Natural killer cell (primary cell): ENCODE measurements at regions of chr1 and their contacts with region 1.

Region 1: DNA sequence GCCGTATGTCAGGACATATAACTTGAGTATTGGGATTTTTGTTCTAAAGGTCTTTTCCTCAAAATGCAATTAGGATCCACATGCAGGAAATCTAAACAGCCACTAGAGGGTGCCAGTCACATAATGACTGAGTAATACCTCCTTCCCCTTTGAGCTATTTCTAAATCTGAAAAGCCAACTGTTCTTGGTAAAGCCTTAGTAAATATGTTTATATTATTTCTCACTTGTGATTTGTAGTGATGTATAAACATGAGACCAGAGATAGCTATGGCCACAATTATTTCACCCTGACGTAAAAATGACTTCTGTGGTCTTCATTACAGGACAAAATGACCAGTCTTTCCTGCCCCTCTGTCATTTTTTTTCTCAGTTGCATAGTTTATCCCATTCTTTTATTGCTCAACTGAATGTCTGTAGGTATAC is 41.0 kb upstream of the DR1 start:
- DNase-seq: peak in 1 of 2 donors; percentile 83
- ATAC-seq: peak; percentile 70 to 80 (median 77)
- H3K4me3 ChIP-seq: no peak overlapping the region
- H3K4me3 Mint-ChIP-seq: no peak overlapping the region
- H3K27ac ChIP-seq: no peak overlapping the region
- H3K27ac Mint-ChIP-seq: no peak overlapping the region
- H3K4me1 ChIP-seq: no peaks in the 10 kb centered on the region
- H3K4me1 Mint-ChIP-seq: no peaks in the 10 kb centered on the region
- H3K27me3 ChIP-seq: no peaks in the 10 kb centered on the region
- H3K27me3 Mint-ChIP-seq: no peaks in the 10 kb centered on the region
- CTCF ChIP-seq: peak; percentile 95

Region 2: DNA sequence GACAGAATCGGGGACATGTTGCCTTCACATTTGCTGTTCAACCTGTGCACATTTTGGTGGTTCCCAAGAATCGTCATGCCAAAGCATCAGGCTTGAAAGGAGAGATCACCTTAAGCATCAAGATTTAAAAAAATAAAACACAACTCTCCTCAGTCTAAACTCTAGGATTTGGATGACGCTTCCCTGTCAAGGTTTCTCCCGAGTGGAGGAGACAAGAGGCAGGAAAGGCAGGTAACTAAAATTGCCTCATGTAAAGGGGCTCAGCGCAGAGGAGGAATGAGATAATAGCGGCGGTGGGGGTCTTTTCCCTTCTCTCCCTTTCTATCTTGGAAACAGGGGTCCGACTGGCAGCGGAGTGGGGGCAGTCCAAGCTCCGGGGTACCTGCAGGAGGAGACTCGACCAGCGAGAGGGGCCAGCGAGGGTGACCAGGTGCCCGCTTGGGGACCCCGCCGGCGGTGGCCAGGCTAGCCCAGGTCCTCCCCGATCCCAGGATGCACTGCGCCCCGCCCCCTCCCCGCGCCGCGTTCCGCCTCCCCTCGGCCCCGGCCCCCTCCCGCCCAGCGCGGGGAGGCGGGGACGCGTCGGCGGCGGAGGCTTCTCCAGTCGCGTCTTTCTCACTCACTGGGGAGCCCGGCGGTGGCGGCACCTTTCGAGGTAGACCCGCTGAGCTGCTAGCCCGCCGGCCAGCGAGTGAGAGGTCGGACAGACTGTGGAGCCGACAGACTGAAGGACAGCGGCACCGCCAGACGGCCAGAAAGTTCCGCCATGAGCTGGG is 143.0 kb after region 1 on chr1 and contains the start of gene FNBP1L:
- intact Hi-C with region 1: loop called (anchors 10 kb)
- DNase-seq: peak; percentile 32 to 72
- ATAC-seq: peak; percentile 78 to 83 (median 83)
- H3K4me3 ChIP-seq: peak within 1 kb of the TSS; percentile 68
- H3K4me3 Mint-ChIP-seq: peak within 1 kb of the TSS; percentile 92
- H3K27ac ChIP-seq: no peak within 1 kb of the TSS
- H3K27ac Mint-ChIP-seq: peak within 1 kb of the TSS in 1 of 2 donors; percentile 75
- H3K4me1 ChIP-seq: peaks cover 21% of the 10 kb centered on the region
- H3K4me1 Mint-ChIP-seq: peaks cover 18 to 24% of the 10 kb centered on the region in 2 donors
- H3K27me3 ChIP-seq: peaks cover 35% of the 10 kb centered on the region
- H3K27me3 Mint-ChIP-seq: peaks cover 45 to 57% of the 10 kb centered on the region in 2 donors
- CTCF ChIP-seq: no peak
- total RNA-seq, gene FNBP1L: 0.33 to 6.7 (median 0.84) TPM

Region 3: GRCh38 chr1:93607814-93608186 is 303.1 kb after region 1 on chr1:
- intact Hi-C with region 1: loop called (anchors 10 kb)
- DNase-seq: no peak
- ATAC-seq: no peak
- H3K4me3 ChIP-seq: no peak overlapping the region
- H3K4me3 Mint-ChIP-seq: no peak overlapping the region
- H3K27ac ChIP-seq: no peak overlapping the region
- H3K27ac Mint-ChIP-seq: no peak overlapping the region
- H3K4me1 ChIP-seq: no peaks in the 10 kb centered on the region
- H3K4me1 Mint-ChIP-seq: no peaks in the 10 kb centered on the region
- H3K27me3 ChIP-seq: no peaks in the 10 kb centered on the region
- H3K27me3 Mint-ChIP-seq: peaks cover 16 to 26% of the 10 kb centered on the region in 2 donors
- CTCF ChIP-seq: no peak